CD8-positive, alpha-beta T cell (primary cell): ENCODE measurements at regions of chr12 and their contacts with region 1.

Region 1: DNA sequence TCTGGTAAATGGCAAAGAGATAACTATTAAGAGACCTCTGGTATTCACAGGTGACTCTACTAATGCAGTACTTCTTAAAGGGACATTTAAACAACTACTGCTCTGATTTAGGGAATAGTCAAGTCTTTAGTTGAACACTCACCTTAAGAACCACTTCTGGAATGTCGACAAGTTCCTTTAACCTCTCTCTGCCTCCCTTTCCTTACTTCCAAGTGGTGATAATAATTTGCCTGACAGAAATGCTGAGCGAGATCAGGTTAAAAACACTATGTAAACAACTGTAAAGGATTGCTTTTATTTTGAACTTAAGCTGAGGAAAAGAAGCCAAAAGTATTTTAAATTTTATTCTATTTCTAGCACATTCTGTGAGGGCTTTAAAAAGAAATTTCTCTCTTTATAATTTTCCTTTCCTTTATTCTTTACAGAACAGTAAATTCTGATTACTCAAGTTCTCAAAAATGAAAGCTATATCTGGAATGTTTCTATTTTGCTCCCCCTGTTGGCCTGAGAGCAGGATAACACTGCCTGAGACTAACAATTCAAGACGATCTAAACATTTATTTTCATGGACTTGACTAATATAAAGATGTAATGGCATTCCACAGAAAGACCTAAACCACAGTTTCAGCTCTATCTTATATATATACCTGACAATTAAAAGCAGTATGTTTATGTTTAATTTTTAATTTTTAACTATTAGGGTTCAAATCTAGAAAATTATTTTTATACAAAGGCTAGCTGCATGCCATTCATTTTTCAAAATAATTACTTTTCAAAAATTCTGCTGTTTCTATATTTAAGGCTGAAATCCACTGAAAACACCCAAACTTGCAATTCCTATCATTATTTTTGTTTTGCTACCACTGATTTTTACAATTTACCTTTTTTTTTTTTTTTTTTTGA is 29.2 kb downstream of the ZCCHC8 start:
- DNase-seq: peak in 4 of 9 experiments; percentile 11 to 80 (median 54)
- ATAC-seq: peak; percentile 82
- H3K4me3 ChIP-seq: no peak overlapping the region
- H3K4me3 Mint-ChIP-seq: no peak overlapping the region
- H3K27ac ChIP-seq: no peak overlapping the region
- H3K27ac Mint-ChIP-seq: peak overlapping the region; percentile 27
- H3K4me1 ChIP-seq: no peaks in the 10 kb centered on the region
- H3K4me1 Mint-ChIP-seq: peaks cover 8% of the 10 kb centered on the region
- H3K27me3 ChIP-seq: no peaks in the 10 kb centered on the region
- H3K27me3 Mint-ChIP-seq: no peaks in the 10 kb centered on the region
- CTCF ChIP-seq: peak; percentile 88

Region 2: GRCh38 chr12:122336015-122336946 is 135.3 kb before region 1 on chr12:
- CTCF ChIA-PET with region 1: interaction called, 8 read pairs
- POLR2A ChIA-PET with region 1: no interaction called
- intact Hi-C with region 1: loop called in 1 of 2 experiments (anchors 1 kb)
- DNase-seq: peak in 8 of 9 experiments; percentile 16 to 61 (median 52)
- ATAC-seq: no peak
- H3K4me3 ChIP-seq: no peak overlapping the region
- H3K4me3 Mint-ChIP-seq: no peak overlapping the region
- H3K27ac ChIP-seq: no peak overlapping the region
- H3K27ac Mint-ChIP-seq: no peak overlapping the region
- H3K4me1 ChIP-seq: no peaks in the 10 kb centered on the region
- H3K4me1 Mint-ChIP-seq: peaks cover 6% of the 10 kb centered on the region
- H3K27me3 ChIP-seq: no peaks in the 10 kb centered on the region
- H3K27me3 Mint-ChIP-seq: no peaks in the 10 kb centered on the region
- CTCF ChIP-seq: peak; percentile 37

Region 3: GRCh38 chr12:122374707-122375106 is 96.9 kb before region 1 on chr12:
- CTCF ChIA-PET with region 1: interaction called, 11 read pairs
- POLR2A ChIA-PET with region 1: no interaction called
- intact Hi-C with region 1: no loop called
- DNase-seq: no peak
- ATAC-seq: no peak
- H3K4me3 ChIP-seq: no peak overlapping the region
- H3K4me3 Mint-ChIP-seq: no peak overlapping the region
- H3K27ac ChIP-seq: no peak overlapping the region
- H3K27ac Mint-ChIP-seq: no peak overlapping the region
- H3K4me1 ChIP-seq: no peaks in the 10 kb centered on the region
- H3K4me1 Mint-ChIP-seq: peaks cover 13% of the 10 kb centered on the region
- H3K27me3 ChIP-seq: no peaks in the 10 kb centered on the region
- H3K27me3 Mint-ChIP-seq: no peaks in the 10 kb centered on the region
- CTCF ChIP-seq: no peak

Region 4: GRCh38 chr12:122413516-122414404 is 57.8 kb before region 1 on chr12:
- CTCF ChIA-PET with region 1: interaction called, 29 read pairs
- POLR2A ChIA-PET with region 1: interaction called, 3 read pairs
- intact Hi-C with region 1: no loop called
- DNase-seq: no peak
- ATAC-seq: no peak
- H3K4me3 ChIP-seq: no peak overlapping the region
- H3K4me3 Mint-ChIP-seq: no peak overlapping the region
- H3K27ac ChIP-seq: peak overlapping the region in 1 of 2 experiments; percentile 44
- H3K27ac Mint-ChIP-seq: peak overlapping the region; percentile 18
- H3K4me1 ChIP-seq: no peaks in the 10 kb centered on the region
- H3K4me1 Mint-ChIP-seq: peaks cover 31% of the 10 kb centered on the region
- H3K27me3 ChIP-seq: no peaks in the 10 kb centered on the region
- H3K27me3 Mint-ChIP-seq: no peaks in the 10 kb centered on the region
- CTCF ChIP-seq: no peak

Region 5: DNA sequence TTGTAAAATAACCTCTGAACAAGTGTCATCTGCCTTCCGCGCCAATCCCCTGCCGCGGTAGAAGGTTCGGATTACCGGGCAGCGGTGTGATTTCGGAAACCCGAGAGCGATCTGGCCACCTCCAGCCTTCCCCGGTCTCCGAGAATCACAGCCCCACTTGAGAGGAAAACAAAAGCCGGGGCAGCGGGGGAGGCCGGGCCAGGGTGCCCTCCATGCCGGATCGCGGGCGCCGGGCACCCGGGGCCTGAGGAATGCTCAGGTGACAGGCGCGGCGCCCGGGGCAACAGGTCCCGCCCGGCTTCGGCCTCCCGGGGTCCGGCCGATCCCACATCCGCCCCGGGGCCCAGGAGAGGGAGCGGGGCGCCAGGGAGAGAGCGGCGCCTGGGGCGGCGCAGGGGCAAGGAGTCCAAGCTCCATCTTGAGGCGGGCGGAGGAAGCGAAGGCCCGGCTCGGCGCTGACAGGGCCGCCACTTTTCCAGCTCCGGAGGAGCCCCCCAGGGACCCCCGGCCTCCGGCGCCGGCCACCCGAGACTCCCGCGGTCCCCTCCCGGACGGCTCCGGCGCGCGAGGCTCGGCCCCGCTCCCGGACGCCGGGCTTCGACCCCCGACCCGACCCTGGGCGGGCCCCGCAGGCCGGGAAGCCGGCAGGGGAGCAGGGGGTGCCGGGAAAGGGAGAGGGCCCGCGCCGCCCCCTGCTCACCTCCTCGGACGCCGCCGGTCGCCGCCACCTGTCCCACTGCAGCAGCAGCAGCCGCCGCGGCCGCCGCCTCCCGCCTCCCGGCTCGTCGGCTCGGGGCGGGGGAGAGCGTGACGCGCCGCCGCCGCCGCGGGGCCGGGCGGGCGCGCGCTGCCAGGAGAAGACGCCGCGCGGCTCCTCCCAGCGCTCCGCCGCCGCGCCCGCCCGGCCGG is 49.5 kb before region 1 on chr12 and contains the start of gene CLIP1:
- CTCF ChIA-PET with region 1: interaction called, 41 read pairs
- POLR2A ChIA-PET with region 1: interaction called, 3 read pairs
- intact Hi-C with region 1: loop called in 1 of 2 experiments (anchors 1 kb)
- DNase-seq: peak; percentile 16 to 79 (median 55)
- ATAC-seq: peak; percentile 80
- H3K4me3 ChIP-seq: peak within 1 kb of the TSS; percentile 49 to 68
- H3K4me3 Mint-ChIP-seq: peak within 1 kb of the TSS; percentile 91
- H3K27ac ChIP-seq: peak within 1 kb of the TSS; percentile 49 to 71
- H3K27ac Mint-ChIP-seq: peak within 1 kb of the TSS; percentile 84
- H3K4me1 ChIP-seq: peaks cover 19% of the 10 kb centered on the region
- H3K4me1 Mint-ChIP-seq: peaks cover 30% of the 10 kb centered on the region
- H3K27me3 ChIP-seq: no peaks in the 10 kb centered on the region
- H3K27me3 Mint-ChIP-seq: no peaks in the 10 kb centered on the region
- CTCF ChIP-seq: peak; percentile 52
- total RNA-seq, gene CLIP1: 48.6 to 49.6 TPM

Region 6: DNA sequence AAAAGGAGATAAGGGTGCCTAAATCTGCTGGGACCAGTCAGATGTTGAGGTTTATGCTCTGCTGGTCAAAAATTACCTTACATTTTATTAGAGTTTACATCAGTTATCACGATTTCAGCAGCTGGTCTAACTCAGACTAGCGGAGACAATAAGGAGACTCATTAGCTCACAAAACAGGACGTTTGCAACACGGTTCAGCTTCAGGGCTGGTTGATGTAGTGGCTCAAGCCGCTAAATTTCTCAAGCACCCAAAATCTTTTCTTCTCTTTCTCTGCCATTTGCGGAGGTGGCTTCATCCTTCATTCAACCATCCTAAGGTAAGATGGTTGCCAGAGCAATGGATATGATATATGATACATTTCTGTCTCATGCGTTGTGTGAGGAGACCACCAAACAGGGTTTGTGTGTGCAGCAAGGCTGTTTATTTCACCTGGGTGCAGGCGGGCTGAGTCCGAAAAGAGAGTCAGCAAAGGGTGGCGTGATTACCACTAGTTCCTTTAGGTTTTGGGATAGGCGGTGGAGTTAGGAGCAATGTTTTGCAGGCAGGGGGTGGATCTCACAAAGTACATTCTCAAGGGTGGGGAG is 18.8 kb before region 1 on chr12:
- CTCF ChIA-PET with region 1: interaction called, 19 read pairs
- POLR2A ChIA-PET with region 1: interaction called, 5 read pairs
- intact Hi-C with region 1: loop called in 1 of 2 experiments (anchors 2 kb)
- DNase-seq: peak in 2 of 9 experiments; percentile 35 to 56
- ATAC-seq: peak; percentile 18
- H3K4me3 ChIP-seq: peak overlapping the region in 1 of 2 experiments; percentile 1
- H3K4me3 Mint-ChIP-seq: peak overlapping the region; percentile 74
- H3K27ac ChIP-seq: peak overlapping the region; percentile 33 to 74
- H3K27ac Mint-ChIP-seq: peak overlapping the region; percentile 97
- H3K4me1 ChIP-seq: peaks cover 29% of the 10 kb centered on the region
- H3K4me1 Mint-ChIP-seq: peaks cover 27% of the 10 kb centered on the region
- H3K27me3 ChIP-seq: no peaks in the 10 kb centered on the region
- H3K27me3 Mint-ChIP-seq: no peaks in the 10 kb centered on the region
- CTCF ChIP-seq: no peak

Region 7: GRCh38 chr12:122500685-122501488 is 29.3 kb after region 1 on chr12 and contains the start of gene ZCCHC8:
- CTCF ChIA-PET with region 1: interaction called, 10 read pairs
- POLR2A ChIA-PET with region 1: no interaction called
- intact Hi-C with region 1: no loop called
- DNase-seq: peak; percentile 92 to 98 (median 96)
- ATAC-seq: peak; percentile 92
- H3K4me3 ChIP-seq: peak within 1 kb of the TSS; percentile 74 to 80
- H3K4me3 Mint-ChIP-seq: peak within 1 kb of the TSS; percentile 97
- H3K27ac ChIP-seq: peak within 1 kb of the TSS; percentile 90 to 92
- H3K27ac Mint-ChIP-seq: peak within 1 kb of the TSS; percentile 99
- H3K4me1 ChIP-seq: peaks cover 17% of the 10 kb centered on the region
- H3K4me1 Mint-ChIP-seq: peaks cover 40% of the 10 kb centered on the region
- H3K27me3 ChIP-seq: no peaks in the 10 kb centered on the region
- H3K27me3 Mint-ChIP-seq: no peaks in the 10 kb centered on the region
- CTCF ChIP-seq: no peak
- total RNA-seq, gene ZCCHC8: 53.4 to 55.6 TPM